ENCODE measurements at regions of chr2 and their contacts with region 1.

Region 1: GRCh38 chr2:219552382-219553167 is 8.7 kb downstream of the TMEM198 start:
- DNase-seq: peak; percentile 94 to 99 (median 96)
- H3K4me3 ChIP-seq: peak overlapping the region; percentile 70
- H3K27ac ChIP-seq: peak overlapping the region; percentile 66 to 92
- H3K4me1 ChIP-seq: peaks cover 6% of the 10 kb centered on the region
- H3K27me3 ChIP-seq: no peaks in the 10 kb centered on the region
- CTCF ChIP-seq: no peak
- EP300 ChIP-seq: no peak
- POLR2A ChIP-seq: peak; percentile 30

Region 2: GRCh38 chr2:219609149-219609750 is 56.7 kb after region 1 on chr2:
- intact Hi-C with region 1: loop called in 1 of 4 experiments (anchors 5 kb)
- DNase-seq: peak; percentile 54 to 77 (median 67)
- H3K4me3 ChIP-seq: no peak overlapping the region
- H3K27ac ChIP-seq: peak overlapping the region; percentile 93 to 95
- H3K4me1 ChIP-seq: peaks cover 61% of the 10 kb centered on the region
- H3K27me3 ChIP-seq: no peaks in the 10 kb centered on the region
- CTCF ChIP-seq: no peak
- EP300 ChIP-seq: no peak
- POLR2A ChIP-seq: no peak

Region 3: GRCh38 chr2:219633276-219634065 is 80.9 kb after region 1 on chr2:
- intact Hi-C with region 1: loop called in 2 of 4 experiments (anchors 5 kb)
- DNase-seq: no peak
- H3K4me3 ChIP-seq: no peak overlapping the region
- H3K27ac ChIP-seq: peak overlapping the region in 1 of 2 donors; percentile 38
- H3K4me1 ChIP-seq: peaks cover 6% of the 10 kb centered on the region
- H3K27me3 ChIP-seq: no peaks in the 10 kb centered on the region
- CTCF ChIP-seq: no peak
- EP300 ChIP-seq: no peak
- POLR2A ChIP-seq: no peak

Measured in ovary (tissue), 10 donors.